Activated CD4-positive, alpha-beta T cell treated with anti-CD3 and anti-CD28 coated beads, Interleukin-2, amount 10 ng/mL, durations not matched to agents 24 days and 14 days (primary cell): ENCODE measurements at regions of chr7 and their contacts with region 1.

Region 1: DNA sequence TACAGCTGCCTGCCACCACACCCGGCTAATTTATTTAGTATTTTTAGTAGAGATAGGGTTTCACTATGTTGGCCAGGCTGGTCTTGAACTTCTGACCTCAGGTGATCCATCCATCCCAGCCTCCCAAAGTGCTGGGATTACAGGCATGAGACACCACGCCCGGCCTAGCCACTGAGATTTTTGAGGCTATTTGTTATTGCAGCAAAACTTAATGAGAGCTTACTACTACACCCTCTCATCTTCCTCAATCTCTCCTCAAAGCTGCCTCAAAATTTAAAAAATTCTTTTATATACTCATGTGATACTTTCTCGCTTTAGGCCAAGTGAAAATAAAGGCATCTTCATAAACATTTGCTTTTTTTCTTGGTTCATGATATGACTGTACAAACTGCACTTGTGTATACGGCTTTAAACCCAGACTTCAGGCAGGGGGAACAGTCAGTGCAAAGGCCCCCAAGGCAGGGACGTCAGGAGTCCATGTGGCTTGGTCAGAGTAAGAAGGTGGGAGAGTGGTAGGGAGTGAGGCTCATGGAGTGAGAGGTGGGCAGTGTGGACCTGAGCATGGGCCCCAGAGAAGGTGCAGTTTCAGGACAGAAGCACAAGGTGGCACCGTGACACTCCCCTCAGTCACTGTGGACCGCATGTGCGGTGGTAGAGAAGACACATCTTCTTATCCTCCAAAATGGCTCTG is 55.5 kb downstream of the SYPL1 start:
- DNase-seq: peak; percentile 90
- H3K4me3 Mint-ChIP-seq: no peak overlapping the region
- H3K27ac Mint-ChIP-seq: no peak overlapping the region
- H3K4me1 Mint-ChIP-seq: peaks cover 28% of the 10 kb centered on the region
- H3K27me3 Mint-ChIP-seq: peaks cover 10% of the 10 kb centered on the region

Region 2: DNA sequence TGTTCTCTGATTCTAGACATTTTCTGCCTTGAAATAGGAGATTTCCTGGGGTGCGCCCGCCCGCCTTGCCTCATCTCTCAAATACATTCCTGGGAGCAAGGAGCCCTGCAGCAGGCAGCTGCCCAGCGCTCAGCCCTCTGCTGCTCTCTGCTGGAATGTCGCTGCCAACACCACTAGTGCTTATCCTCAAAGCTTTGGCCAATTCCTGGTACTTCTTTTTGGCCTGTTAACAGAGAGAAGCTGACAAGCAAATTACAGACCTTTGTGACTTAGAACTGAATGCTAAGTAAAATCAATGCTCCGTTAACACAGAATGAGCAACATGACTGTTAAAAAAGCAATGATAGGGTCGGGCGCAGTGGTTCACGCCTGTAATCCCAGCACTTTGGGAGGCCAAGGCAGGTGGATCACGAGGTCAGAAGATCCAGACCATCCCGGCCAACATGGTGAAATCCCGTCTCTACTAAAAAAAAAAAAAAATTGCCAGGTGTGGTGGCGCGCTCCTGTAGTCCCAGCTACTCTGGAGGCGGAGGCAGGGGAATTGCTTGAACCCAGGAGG is 97.3 kb after region 1 on chr7:
- intact Hi-C with region 1: loop called (anchors 1 kb)
- DNase-seq: peak; percentile 91
- H3K4me3 Mint-ChIP-seq: no peak overlapping the region
- H3K27ac Mint-ChIP-seq: no peak overlapping the region
- H3K4me1 Mint-ChIP-seq: peaks cover 12% of the 10 kb centered on the region
- H3K27me3 Mint-ChIP-seq: peaks cover 34% of the 10 kb centered on the region

Region 3: DNA sequence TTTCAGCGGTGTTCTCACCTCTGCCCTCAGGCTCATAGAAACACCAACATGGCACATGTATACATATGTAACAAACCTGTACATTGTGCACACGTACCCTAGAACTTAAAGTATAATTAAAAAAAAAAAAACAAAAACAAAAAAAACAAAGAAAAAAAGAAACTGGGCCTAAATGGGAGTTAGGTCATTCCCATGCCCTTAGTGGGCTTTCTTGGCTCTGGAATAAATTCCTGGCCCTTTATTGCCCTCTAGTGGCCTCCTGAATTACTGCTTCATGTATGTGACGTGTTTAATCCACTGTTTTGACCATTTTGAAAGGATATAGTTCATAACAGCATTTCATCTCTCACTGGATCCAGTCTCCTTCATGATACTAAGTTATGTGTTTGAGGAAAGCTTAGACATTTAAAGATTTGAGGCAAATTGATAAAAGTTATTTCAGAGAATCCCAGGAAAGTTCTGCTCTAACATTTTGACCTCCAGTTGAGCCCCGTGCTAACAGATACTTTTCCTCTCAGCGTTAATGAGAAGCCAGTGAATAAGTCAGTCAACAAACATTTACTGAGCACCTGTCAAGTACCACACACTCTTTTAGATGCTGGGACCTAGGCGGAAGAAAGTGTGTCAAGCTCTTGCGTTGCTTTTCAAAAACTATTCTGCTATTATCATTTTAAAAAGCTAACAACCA is 110.1 kb after region 1 on chr7:
- intact Hi-C with region 1: loop called (anchors 1 kb)
- DNase-seq: peak; percentile 82
- H3K4me3 Mint-ChIP-seq: no peak overlapping the region
- H3K27ac Mint-ChIP-seq: no peak overlapping the region
- H3K4me1 Mint-ChIP-seq: peaks cover 3% of the 10 kb centered on the region
- H3K27me3 Mint-ChIP-seq: peaks cover 15% of the 10 kb centered on the region